IMR-90 (cell line): ENCODE measurements at regions of chr1 and their contacts with region 1.

Region 1: DNA sequence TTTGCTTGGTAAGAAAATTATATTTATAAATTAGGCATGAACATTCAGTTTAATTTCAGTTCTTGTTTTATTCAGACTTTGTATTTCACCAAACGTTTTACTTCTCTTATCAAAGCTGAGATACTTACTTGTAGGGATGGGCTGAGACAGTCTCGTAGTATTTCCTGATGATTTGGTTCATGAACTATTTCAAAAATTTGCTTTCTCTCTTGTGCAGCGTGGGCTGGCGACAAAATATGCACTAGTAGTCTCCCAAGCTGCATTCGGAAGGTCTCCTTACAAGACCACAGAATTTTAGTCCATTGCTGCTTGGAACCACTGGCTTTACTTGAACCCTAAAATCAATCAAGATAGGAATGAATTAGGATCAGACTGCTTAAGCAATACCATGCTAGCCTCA is 91.7 kb upstream of the GNG4 start:
- DNase-seq: peak; percentile 87
- ATAC-seq: peak; percentile 86
- H3K4me3 ChIP-seq: no peak overlapping the region
- H3K27ac ChIP-seq: peak overlapping the region; percentile 32; the same call in 1 of the 2 replicates
- H3K4me1 ChIP-seq: peaks cover 6% of the 10 kb centered on the region
- H3K27me3 ChIP-seq: no peaks in the 10 kb centered on the region
- CTCF ChIP-seq: no peak
- POLR2A ChIP-seq: peak; percentile 19; the same call in 1 of the 2 replicates
- RAD21 ChIP-seq: no peak

Region 2: GRCh38 chr1:235708390-235708962 is 32.8 kb before region 1 on chr1:
- CTCF ChIA-PET with region 1: no interaction called
- POLR2A ChIA-PET with region 1: no interaction called
- dilution Hi-C with region 1: no loop called
- in situ Hi-C with region 1: no loop called
- intact Hi-C with region 1: loop called (anchors 5 kb)
- DNase-seq: peak; percentile 66
- ATAC-seq: no peak; the same call in 1 of the 2 replicates
- H3K4me3 ChIP-seq: no peak overlapping the region
- H3K27ac ChIP-seq: no peak overlapping the region
- H3K4me1 ChIP-seq: peaks cover 4% of the 10 kb centered on the region
- H3K27me3 ChIP-seq: no peaks in the 10 kb centered on the region
- CTCF ChIP-seq: no peak
- POLR2A ChIP-seq: no peak
- RAD21 ChIP-seq: no peak

Region 3: GRCh38 chr1:235776396-235776795 is 35.1 kb after region 1 on chr1:
- CTCF ChIA-PET with region 1: no interaction called
- POLR2A ChIA-PET with region 1: no interaction called
- dilution Hi-C with region 1: no loop called
- in situ Hi-C with region 1: no loop called
- intact Hi-C with region 1: no loop called
- DNase-seq: peak; percentile 23
- ATAC-seq: no peak
- H3K4me3 ChIP-seq: no peak overlapping the region
- H3K27ac ChIP-seq: no peak overlapping the region
- H3K4me1 ChIP-seq: no peaks in the 10 kb centered on the region
- H3K27me3 ChIP-seq: no peaks in the 10 kb centered on the region
- CTCF ChIP-seq: no peak
- POLR2A ChIP-seq: no peak
- RAD21 ChIP-seq: no peak